ENCODE measurements at regions of chr9 and their contacts with region 1.

Region 1: DNA sequence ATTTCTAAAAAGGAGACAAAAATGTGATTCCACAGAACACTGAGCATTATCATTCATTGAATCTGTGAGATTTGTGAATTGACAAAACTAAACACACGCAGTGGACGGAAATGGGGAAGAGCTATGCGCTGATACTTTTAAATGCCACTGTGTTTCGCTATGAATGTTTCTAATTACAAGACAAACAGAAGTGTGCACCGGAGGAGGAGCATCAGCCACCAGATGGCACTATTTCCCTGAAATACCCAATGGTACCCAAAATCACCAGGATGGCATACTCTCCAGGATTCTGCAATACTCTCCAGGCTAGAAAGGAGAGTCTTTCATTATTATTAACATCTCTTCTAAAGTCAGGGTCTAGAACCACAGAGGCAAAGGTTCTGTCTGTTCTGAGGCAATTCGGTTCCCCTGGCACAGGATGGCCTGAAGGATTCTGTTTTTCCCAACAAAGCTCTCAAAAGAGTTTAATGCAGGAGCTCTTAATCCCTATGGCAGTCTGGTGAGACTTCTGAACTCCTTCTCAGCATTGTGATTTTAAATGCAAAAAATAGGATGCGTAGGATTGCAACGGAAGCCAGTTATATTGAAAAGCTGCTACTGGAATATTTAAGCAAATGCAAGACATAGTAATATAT is 13.8 kb upstream of the PUM3 start:
- DNase-seq: peak; percentile 51
- ATAC-seq: peak; percentile 82 to 85

Region 2: GRCh38 chr9:3181049-3181953 is 323.6 kb after region 1 on chr9:
- intact Hi-C with region 1: loop called (anchors 2 to 10 kb)
- DNase-seq: peak; percentile 36
- ATAC-seq: peak; percentile 57 to 80

Region 3: DNA sequence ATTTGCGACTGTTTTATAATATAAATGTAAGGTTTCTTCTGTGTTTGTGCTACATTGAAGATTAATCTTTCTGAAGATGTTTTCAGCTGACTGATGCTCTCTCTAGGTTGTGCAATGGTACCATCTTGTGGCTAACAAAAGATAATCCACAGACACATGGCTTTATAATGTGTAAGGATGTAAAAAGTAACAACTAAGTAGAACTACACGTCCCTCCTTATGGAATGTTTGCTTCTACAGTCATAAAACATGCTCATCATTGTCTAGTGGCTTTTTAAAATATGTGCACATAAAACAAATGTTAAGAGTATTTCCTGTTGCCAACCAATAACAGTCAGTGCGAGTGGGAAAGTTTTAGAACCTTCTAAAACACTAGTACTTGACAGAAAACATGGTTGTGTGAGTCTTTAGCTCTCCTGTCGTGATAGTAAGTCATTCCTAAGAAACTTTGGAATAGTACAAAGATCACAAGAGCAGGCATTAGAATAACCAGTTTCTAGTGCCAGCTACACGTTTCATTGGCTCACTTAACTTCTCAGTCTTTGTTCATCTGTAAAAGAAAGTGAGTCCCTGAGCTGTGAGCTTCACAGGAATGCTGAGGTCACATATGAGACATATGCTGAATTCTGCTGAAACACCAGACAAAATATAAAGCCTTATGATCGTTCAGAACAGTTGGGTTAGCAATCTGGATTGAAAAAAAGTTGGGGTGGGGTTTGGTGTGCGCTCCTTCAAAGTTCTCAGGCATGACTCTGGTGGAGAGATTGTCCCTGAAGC is 1517.9 kb after region 1 on chr9:
- intact Hi-C with region 1: loop called (anchors 5 to 10 kb)
- DNase-seq: no peak
- ATAC-seq: peak; percentile 58 to 59